Upper lobe of right lung (tissue), 1 donor: ENCODE measurements at regions of chr6 and their contacts with region 1.

Region 1: DNA sequence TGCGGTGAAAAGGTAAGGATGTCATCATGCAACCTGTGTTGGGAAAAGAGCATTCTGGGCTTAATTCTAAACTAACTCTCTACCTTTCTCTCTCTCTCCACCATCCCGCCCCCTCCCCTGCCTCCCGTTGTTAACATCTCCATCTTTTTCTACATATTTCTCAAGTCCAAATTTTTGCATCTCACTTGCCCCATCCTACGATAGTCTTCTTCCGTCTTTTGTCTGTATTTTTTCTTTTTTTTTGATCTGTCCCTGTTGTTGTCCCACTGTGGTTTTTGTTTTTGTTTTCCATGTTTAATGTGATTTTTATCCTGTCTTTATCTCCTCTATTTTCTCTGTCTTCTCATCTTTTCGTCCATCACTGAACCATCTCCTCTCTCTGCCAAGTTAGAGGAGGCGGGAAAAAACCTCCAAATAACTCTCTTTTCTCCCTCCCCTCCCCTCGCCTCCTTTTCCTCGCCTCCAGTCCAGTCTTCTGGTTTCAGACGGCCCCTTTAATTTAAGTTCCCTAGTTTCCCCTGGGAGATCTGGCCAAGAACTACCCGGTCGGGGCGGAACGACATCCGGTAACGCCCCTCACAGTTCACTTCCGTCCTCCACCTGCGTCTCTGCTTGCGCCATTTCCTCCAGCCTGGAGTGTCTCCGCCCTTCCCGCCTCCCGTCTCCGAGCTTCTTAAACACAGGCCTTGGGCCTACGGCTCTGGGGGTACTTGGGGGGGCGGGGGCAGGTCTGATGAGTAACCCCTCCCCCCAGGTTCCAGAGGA is at the start of gene NFKBIL1:
- DNase-seq: peak; percentile 95
- ATAC-seq: peak; percentile 96
- H3K4me3 ChIP-seq: peak within 1 kb of the TSS; percentile 60
- H3K27ac ChIP-seq: peak within 1 kb of the TSS; percentile 89
- H3K4me1 ChIP-seq: peaks cover 18% of the 10 kb centered on the region
- H3K27me3 ChIP-seq: no peaks in the 10 kb centered on the region
- CTCF ChIP-seq: no peak
- total RNA-seq, gene NFKBIL1: 22.6 TPM

Region 2: GRCh38 chr6:31441365-31442267 is 105.5 kb before region 1 on chr6:
- intact Hi-C with region 1: no loop called
- DNase-seq: peak; percentile 94
- ATAC-seq: peak; percentile 100
- H3K4me3 ChIP-seq: no peak overlapping the region
- H3K27ac ChIP-seq: no peak overlapping the region
- H3K4me1 ChIP-seq: no peaks in the 10 kb centered on the region
- H3K27me3 ChIP-seq: no peaks in the 10 kb centered on the region
- CTCF ChIP-seq: peak; percentile 87

Region 3: DNA sequence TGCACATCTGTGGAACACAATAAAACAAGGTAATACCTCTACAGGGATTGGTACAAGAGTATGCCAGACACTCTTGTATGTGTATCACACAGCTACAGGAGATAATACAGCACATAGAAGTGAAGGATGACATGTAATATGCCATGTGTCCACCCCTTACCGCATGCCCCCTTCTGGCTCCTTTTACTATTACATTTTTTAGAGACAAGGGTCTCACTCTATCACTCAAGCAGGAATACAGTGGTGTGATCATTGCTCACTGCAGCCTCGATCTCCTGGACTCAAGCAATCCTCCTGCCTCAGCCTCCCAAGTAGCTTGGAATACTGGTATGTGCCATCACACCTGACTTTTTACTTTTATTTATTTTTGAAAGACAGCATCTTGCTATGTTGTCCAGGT is 49.9 kb after region 1 on chr6:
- intact Hi-C with region 1: loop called (anchors 5 kb)
- DNase-seq: no peak
- ATAC-seq: peak; percentile 77
- H3K4me3 ChIP-seq: no peak overlapping the region
- H3K27ac ChIP-seq: no peak overlapping the region
- H3K4me1 ChIP-seq: no peaks in the 10 kb centered on the region
- H3K27me3 ChIP-seq: no peaks in the 10 kb centered on the region
- CTCF ChIP-seq: peak; percentile 41